ENCODE measurements at regions of chr5 and their contacts with region 1.

Region 1: DNA sequence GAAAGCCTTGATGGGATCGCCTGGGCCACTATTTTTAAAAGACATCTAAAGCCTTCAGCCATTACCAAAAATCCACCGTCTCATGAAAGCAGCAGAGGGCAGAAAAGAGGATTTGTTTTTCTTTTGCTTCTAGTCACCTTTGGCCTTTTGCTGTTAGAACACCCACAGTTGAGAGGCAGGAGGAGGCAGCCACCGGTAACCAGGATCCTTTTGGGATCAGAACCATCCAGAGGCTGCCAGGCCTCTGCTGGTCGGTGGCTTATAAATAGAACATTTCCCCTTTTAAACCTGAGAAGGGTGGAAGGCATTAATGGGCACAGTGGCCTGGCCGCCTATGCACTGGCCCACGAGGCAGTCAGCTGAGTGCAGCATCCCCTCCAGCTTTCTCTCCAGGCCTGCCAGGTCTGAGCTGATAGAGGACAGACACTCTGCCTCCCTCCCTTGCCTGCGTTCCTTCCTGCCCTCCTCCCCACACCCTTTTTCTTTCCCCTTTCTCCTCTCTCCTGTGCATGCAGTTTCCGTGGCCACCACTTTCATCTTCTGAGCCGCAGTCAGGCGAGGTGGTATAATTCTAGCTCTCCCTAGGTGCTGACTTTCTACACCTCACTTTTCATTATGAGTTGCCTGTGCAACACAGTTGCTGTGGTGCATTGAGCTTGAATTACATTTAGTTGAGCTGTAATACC is 253.4 kb downstream of the ARHGAP26 start:
- DNase-seq: peak; percentile 63 to 89 (median 80)
- ATAC-seq: peak; percentile 95 to 97 (median 96)
- H3K4me3 ChIP-seq: no peak overlapping the region
- H3K27ac ChIP-seq: peak overlapping the region; percentile 34 to 83 (median 66)
- H3K4me1 ChIP-seq: peaks cover 0 to 51% (median 24%) of the 10 kb centered on the region in 12 donors
- H3K27me3 ChIP-seq: no peaks in the 10 kb centered on the region
- CTCF ChIP-seq: peak in 3 of 12 donors; percentile 11 to 30 (median 15)
- POLR2A ChIP-seq: no peak

Region 2: GRCh38 chr5:143066556-143067281 is 43.2 kb after region 1 on chr5:
- intact Hi-C with region 1: loop called in 2 of 10 experiments (anchors 2 to 5 kb)
- DNase-seq: peak in 2 of 5 donors; percentile 43
- ATAC-seq: peak in 1 of 4 donors; percentile 23
- H3K4me3 ChIP-seq: no peak overlapping the region
- H3K27ac ChIP-seq: peak overlapping the region in 8 of 12 donors; percentile 1 to 81 (median 34)
- H3K4me1 ChIP-seq: peaks cover 5 to 60% (median 51%) of the 10 kb centered on the region in 12 donors
- H3K27me3 ChIP-seq: no peaks in the 10 kb centered on the region
- CTCF ChIP-seq: no peak
- POLR2A ChIP-seq: no peak

Region 3: DNA sequence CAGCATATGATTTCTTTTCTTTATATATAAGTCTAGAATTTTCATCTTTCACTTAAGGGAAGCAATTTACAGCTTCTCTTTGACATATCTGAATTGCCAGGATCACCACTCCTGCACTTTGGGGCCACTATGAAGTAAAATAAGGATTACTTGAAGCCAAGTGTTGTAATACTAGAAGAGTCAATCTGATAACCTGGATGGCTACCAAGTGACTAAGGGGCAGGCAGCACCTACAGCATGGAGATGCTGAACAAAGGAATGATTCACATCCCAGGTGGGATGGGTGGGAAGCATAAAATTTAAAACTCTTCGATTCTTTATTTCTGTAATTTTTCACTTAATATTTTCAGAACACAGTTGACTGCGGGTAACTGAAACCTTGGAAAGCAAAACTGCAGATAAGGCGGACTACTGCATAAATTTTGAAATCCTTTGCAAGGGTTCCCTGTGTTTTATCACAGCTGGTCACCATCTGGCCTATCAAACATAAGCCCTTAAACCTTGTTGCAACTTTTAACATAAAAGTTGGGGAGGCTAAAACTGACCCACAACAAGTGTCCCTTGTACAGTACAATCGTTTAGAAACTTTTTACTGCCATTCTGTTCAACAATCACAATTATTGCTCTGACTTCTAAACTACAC is 348.8 kb after region 1 on chr5:
- intact Hi-C with region 1: no loop called
- DNase-seq: no peak
- ATAC-seq: peak in 2 of 4 donors; percentile 23 to 38
- H3K4me3 ChIP-seq: no peak overlapping the region
- H3K27ac ChIP-seq: no peak overlapping the region
- H3K4me1 ChIP-seq: peaks cover 3 to 69% (median 38%) of the 10 kb centered on the region in 12 donors
- H3K27me3 ChIP-seq: no peaks in the 10 kb centered on the region
- CTCF ChIP-seq: no peak
- POLR2A ChIP-seq: no peak

Region 4: GRCh38 chr5:143456952-143457547 is 433.5 kb after region 1 on chr5:
- intact Hi-C with region 1: no loop called
- DNase-seq: no peak
- ATAC-seq: peak in 2 of 4 donors; percentile 45 to 80
- H3K4me3 ChIP-seq: no peak overlapping the region
- H3K27ac ChIP-seq: no peak overlapping the region
- H3K4me1 ChIP-seq: peaks cover 0 to 4% (median 0%) of the 10 kb centered on the region in 12 donors
- H3K27me3 ChIP-seq: no peaks in the 10 kb centered on the region
- CTCF ChIP-seq: no peak
- POLR2A ChIP-seq: no peak

Region 5: GRCh38 chr5:143679777-143680176 is 656.2 kb after region 1 on chr5:
- intact Hi-C with region 1: loop called in 1 of 10 experiments (anchors 10 kb)
- DNase-seq: no peak
- ATAC-seq: peak in 2 of 4 donors; percentile 70 to 72
- H3K4me3 ChIP-seq: no peak overlapping the region
- H3K27ac ChIP-seq: peak overlapping the region in 1 of 12 donors; percentile 47
- H3K4me1 ChIP-seq: peaks cover 0 to 31% (median 12%) of the 10 kb centered on the region in 12 donors
- H3K27me3 ChIP-seq: no peaks in the 10 kb centered on the region
- CTCF ChIP-seq: no peak
- POLR2A ChIP-seq: no peak

Measured in heart left ventricle (tissue), 16 donors.